ENCODE measurements at regions of chr16 and their contacts with region 1.

Region 1: GRCh38 chr16:3618769-3619141 is 7.3 kb upstream of the SLX4 start:
- DNase-seq: peak; percentile 59 to 79
- H3K4me3 ChIP-seq: no peak overlapping the region
- H3K27ac ChIP-seq: peak overlapping the region; percentile 61
- H3K4me1 ChIP-seq: peaks cover 13% of the 10 kb centered on the region; the same call in 1 of the 2 replicates
- H3K27me3 ChIP-seq: no peaks in the 10 kb centered on the region
- CTCF ChIP-seq: no peak

Region 2: GRCh38 chr16:3637371-3637923 is 18.7 kb after region 1 on chr16:
- CTCF ChIA-PET with region 1: interaction called, 3 read pairs
- POLR2A ChIA-PET with region 1: interaction called, 14 read pairs
- intact Hi-C with region 1: loop called (anchors 2 kb)
- DNase-seq: no peak
- H3K4me3 ChIP-seq: no peak overlapping the region
- H3K27ac ChIP-seq: no peak overlapping the region
- H3K4me1 ChIP-seq: peaks cover 6% of the 10 kb centered on the region
- H3K27me3 ChIP-seq: no peaks in the 10 kb centered on the region
- CTCF ChIP-seq: no peak

Region 3: DNA sequence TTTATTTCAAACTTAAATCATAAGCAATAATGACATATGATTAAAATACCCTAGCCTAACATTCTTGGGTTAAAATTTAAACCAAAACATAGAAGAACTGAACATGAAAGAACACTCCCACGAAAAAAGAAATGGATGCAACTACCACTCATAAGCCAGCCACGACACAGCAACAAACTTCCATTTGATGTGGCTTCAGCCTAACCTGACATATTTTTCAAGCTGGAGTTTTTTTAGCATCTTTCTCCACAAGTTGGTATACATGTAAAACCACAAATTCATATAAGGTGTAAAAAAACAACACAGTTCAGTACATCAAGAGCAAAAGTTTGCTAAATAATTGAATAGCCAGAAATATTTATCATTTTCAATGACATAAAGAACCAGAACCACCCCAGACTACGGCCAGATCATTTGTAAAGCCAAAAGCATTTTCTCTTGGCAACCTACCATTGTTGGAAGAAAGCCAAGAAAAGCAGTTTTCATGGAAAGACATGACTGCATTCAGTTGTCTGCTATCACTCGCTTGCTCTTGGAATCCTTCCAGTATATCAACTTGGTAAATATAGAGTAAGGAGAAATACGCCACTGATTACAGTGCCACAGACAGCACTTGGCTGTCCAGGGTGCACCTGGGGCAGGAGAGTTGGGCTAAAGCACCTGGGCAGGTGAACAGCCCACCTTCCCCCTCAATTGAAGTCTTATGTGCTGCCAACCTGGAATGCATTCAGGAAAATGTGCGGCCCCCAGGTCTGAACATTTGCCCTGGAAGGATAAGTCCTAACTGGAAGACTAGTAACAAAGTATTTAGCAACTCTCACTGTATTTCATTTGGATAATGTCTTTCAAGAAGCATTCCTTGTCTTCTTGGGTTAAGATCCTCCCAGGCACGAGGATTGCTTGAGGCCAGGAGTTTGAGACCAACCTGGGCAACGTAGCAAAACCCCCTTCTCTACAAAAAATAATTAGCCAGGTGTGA is 201.3 kb after region 1 on chr16:
- CTCF ChIA-PET with region 1: no interaction called
- POLR2A ChIA-PET with region 1: interaction called, 10 read pairs
- intact Hi-C with region 1: no loop called
- DNase-seq: peak; percentile 43 to 46
- H3K4me3 ChIP-seq: no peak overlapping the region
- H3K27ac ChIP-seq: no peak overlapping the region
- H3K4me1 ChIP-seq: peaks cover 17% of the 10 kb centered on the region
- H3K27me3 ChIP-seq: no peaks in the 10 kb centered on the region
- CTCF ChIP-seq: no peak

Region 4: DNA sequence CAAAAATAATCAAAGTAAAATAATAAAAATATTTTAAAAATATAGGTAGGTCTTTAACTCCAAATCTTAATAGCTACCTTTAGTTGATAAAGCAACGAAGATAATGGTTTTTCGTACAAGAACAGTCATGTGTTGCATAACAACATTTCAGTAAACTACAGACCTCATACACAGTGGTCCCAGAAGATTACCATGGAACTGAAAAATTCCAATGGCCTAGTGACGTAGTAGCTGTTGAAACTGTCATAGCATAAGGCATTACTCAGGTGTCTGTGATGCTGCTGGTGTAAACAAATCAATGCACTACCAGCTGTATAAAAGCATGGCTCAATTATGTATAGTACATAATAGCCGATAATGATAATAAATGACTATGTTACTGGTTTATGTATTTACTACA is 217.9 kb after region 1 on chr16:
- CTCF ChIA-PET with region 1: no interaction called
- POLR2A ChIA-PET with region 1: no interaction called
- intact Hi-C with region 1: no loop called
- DNase-seq: no peak
- H3K4me3 ChIP-seq: no peak overlapping the region
- H3K27ac ChIP-seq: no peak overlapping the region
- H3K4me1 ChIP-seq: no peaks in the 10 kb centered on the region
- H3K27me3 ChIP-seq: no peaks in the 10 kb centered on the region
- CTCF ChIP-seq: no peak

Measured in PC-9 (cell line).